ENCODE measurements at regions of chr17 and their contacts with region 1.

Region 1: DNA sequence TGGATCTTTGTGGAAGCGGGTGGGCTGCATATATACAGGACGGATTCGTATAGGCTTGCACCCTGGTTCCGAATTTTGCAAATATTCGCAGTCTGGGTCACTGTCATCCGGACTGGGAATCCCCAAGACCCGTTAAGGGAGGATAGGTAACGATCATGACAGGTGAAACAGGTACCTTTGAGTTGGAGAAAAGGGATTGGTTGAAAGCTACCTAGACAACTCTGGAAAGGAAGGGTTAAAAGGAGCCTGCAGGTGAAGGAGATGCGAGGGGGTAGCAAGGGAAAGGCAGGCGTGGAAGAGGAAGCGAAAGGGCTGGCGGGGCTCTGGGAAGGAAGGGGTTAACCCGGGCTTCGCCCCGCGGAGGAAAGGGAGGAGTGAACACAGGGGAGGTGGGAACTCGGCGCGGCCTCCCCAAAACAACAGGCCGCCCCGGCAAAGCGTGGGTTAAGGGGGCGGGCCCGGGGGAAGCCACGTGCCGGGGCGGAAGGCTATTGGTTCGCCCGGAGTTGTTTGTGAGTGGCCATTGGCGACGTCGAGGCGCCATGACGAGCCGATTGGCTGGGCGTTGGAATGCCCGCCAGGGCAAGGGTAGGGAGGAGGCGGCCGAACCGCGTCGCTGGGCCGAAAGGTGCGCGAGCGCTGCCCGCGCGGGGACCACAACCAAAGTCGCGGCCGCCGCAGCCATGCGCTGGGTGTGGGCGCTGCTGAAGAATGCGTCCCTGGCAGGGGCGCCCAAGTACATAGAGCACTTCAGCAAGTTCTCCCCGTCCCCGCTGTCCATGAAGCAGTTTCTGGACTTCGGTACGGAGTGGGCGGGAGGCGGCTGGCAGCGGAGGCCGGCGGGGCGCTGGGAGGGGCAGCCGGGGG is at the start of gene PDK2:
- DNase-seq: peak; percentile 99
- CTCF ChIP-seq: no peak

Region 2: DNA sequence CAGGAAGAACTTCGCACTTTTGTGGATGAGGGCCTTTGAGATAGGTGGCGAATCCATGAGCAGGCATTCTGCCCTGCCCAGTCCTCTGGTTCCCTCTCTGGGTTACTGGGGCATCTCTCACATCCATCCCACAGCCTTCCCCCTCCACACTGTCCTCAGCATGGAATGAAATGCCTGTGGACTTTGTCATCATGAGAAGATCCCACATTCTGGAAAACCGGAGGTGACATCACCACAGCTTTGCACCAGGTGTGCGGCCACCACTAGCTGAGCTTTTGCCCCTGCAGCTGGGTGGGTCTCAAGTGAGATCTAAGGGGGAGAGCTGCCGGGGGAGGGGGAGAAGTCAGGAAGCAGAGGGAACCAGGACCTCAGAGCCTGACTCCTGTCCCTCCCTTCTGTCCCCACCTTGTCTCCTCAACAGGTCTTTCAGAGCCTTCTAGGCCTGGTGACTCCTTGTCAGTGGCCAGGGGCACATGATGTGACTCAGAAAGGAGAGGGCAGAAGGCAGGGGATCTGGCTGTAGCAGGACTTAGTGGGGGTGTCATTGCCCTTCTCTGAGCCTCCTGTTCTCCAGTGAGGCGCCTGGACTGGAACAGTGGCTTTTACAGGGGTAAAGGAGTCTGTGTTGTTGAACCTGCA is 166.0 kb before region 1 on chr17:
- in situ Hi-C with region 1: no loop called
- DNase-seq: no peak
- CTCF ChIP-seq: no peak

Region 3: GRCh38 chr17:50026901-50027630 is 67.9 kb before region 1 on chr17:
- in situ Hi-C with region 1: loop called (anchors 5 kb)
- DNase-seq: peak; percentile 88
- CTCF ChIP-seq: peak; percentile 96

Region 4: GRCh38 chr17:50218771-50219315 is 123.9 kb after region 1 on chr17:
- in situ Hi-C with region 1: no loop called
- DNase-seq: peak; percentile 29
- CTCF ChIP-seq: no peak

Region 5: GRCh38 chr17:50604513-50604912 is 509.5 kb after region 1 on chr17:
- in situ Hi-C with region 1: no loop called
- DNase-seq: no peak
- CTCF ChIP-seq: no peak